ENCODE measurements at regions of chr5 and their contacts with region 1.

Region 1: GRCh38 chr5:157476702-157477408 is 16.8 kb downstream of the NIPAL4 start:
- DNase-seq: peak in 3 of 10 donors; percentile 57 to 66 (median 62)
- H3K4me3 ChIP-seq: no peak overlapping the region
- H3K27ac ChIP-seq: peak overlapping the region in 26 of 59 donors; percentile 18 to 97 (median 58)
- H3K27me3 ChIP-seq: no peaks in the 10 kb centered on the region
- CTCF ChIP-seq: peak; percentile 50 to 95 (median 80)

Region 2: DNA sequence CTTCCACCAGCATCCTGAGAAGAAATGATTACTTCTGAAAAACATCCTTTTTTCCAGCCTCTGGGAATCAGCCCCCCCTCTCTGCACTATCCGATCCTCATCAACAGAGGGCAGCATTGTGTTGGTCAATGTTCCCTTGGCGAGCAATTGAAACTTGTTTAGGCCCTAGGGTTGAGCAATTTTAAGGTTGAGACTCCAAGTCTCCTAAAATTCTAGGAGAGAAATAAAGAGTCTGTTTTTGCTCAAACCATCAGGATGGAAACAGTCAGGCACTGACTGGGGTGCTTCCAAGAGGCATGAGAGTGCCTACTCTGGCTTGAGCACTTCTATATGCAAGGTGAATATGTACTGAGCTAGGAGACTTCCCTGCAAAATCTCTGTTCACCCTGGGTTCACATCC is 223.3 kb before region 1 on chr5:
- intact Hi-C with region 1: no loop called
- DNase-seq: peak in 6 of 10 donors; percentile 39 to 69 (median 52)
- H3K4me3 ChIP-seq: peak overlapping the region in 1 of 59 donors; percentile 3
- H3K27ac ChIP-seq: peak overlapping the region in 2 of 59 donors; percentile 24 to 35
- H3K27me3 ChIP-seq: no peaks in the 10 kb centered on the region
- CTCF ChIP-seq: peak; percentile 57 to 93 (median 86)

Region 3: DNA sequence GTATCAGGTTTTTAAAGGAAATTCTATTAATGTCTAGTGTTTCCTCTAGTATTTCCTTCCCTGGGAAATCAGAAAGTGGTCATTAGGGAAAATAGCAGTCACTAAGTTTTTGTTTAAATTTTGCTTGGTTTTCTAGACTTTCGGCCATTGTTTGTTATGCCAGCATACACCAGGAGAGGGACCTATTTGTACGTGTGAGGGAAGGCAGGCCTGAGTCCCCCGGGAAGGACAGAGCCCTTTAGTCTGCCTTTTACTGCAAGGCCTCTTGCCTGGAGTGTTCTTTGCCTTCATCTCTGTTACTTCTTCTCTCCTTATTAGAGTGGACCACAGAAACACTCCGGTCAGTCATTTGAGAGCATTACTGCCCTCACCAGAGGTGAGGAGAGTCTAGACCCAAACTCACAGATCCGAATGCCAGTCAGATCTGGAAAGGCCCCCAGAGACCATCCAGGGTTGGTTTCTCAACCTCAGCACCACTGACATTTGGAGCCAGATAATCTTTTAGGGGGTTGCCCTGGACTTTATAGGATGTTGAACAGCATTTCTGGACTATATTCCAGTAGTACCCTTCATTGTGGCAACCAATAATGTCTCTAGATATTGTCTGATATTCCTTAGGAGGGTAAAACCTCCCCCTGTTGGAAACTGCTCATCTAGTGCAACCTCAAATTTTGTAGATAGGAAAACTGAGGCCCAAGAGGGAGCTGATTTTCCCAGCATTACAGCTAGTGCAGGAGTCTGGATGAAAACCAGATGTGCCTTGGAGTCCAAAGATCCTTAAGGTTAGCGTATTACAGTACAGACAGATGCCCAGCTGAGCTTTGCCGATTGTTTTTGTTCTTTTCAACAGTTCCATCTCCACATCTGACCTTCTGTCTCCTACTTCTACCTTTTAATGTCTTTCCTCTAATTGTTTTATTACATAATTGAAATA is 109.8 kb before region 1 on chr5:
- intact Hi-C with region 1: loop called (anchors 5 to 10 kb)
- DNase-seq: peak in 1 of 10 donors; percentile 39
- H3K4me3 ChIP-seq: no peak overlapping the region
- H3K27ac ChIP-seq: peak overlapping the region in 12 of 59 donors; percentile 2 to 45 (median 26)
- H3K27me3 ChIP-seq: no peaks in the 10 kb centered on the region
- CTCF ChIP-seq: peak in 54 of 56 donors; percentile 19 to 73 (median 49)

Region 4: DNA sequence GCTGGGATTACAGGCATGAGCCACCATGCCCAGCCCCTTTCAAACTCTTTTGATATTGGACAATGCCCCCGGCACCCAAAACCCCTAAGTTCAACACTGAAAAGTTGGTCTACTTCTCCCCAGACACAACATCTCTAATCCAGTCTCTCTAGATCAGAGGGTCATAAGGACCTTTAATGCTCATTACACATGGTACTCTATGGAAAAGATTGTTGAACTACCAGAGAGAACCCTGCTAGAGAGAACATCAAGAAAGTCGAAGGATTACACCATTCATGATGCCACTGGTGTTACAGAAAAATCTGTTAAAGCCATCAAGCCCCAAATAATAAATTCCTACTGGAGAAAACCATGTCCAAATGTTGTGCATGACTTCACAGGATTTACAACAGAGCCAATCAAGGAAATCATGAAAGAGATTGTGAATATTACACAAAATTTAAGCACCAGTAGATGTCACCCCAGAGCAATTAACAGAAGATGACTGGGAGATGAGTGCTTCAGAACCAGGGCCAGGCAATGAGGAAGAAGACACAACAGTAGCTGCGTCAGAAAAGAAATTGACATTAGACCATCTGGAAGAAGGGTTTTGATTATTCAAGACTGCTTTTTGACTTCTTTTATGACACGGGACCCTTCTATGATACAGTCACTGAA is 45.2 kb before region 1 on chr5:
- intact Hi-C with region 1: loop called (anchors 1 to 5 kb)
- DNase-seq: peak in 2 of 10 donors; percentile 24 to 32
- H3K4me3 ChIP-seq: peak overlapping the region in 3 of 59 donors; percentile 11 to 40 (median 23)
- H3K27ac ChIP-seq: peak overlapping the region in 29 of 59 donors; percentile 2 to 72 (median 44)
- H3K27me3 ChIP-seq: no peaks in the 10 kb centered on the region
- CTCF ChIP-seq: peak; percentile 46 to 90 (median 72)

Region 5: DNA sequence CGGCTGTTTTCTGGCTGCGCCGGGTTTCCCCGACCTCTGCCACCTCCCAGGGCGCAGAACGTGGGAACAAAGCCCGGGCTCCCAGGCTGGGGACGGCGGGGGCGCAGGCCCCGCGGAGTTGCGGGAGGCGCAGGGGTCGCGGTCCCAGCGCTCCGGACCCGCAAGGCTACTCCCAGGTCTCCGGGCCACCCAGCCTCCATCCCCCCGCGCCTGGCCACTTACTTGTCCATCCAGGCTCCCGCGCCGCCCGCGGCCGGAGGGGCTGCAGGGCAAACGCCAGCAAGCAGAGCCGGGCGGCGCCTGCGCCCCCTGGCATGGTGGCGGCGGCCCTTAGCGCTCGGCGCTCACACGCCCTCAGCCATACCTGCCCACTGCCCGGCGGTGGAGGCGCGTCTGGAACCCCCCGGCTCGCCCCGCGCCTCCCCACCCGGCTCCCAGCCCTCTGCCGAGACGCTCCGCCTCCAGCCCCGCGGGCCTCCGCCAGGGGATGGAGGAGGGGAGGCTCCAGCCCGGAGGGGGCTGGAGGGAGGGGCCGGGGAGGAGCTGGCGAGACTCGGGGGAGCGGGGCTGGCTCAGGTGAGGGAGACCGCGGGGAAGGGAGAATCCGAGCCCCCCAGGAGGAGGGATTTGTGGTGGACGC is 98.6 kb after region 1 on chr5 and contains the start of gene ADAM19:
- intact Hi-C with region 1: loop called in 1 of 2 experiments (anchors 5 kb)
- DNase-seq: peak in 4 of 10 donors; percentile 45 to 61 (median 55)
- H3K4me3 ChIP-seq: peak within 1 kb of the TSS; percentile 60 to 95 (median 80)
- H3K27ac ChIP-seq: peak within 1 kb of the TSS in 54 of 59 donors; percentile 7 to 89 (median 76)
- H3K27me3 ChIP-seq: peaks cover 0 to 7% (median 0%) of the 10 kb centered on the region in 45 donors
- CTCF ChIP-seq: peak in 14 of 56 donors; percentile 9 to 37 (median 24)
- total RNA-seq, gene ADAM19: 6.7 to 17.9 (median 11.0) TPM

Region 6: GRCh38 chr5:157900644-157901043 is 423.8 kb after region 1 on chr5:
- intact Hi-C with region 1: no loop called
- DNase-seq: no peak
- H3K4me3 ChIP-seq: no peak overlapping the region
- H3K27ac ChIP-seq: no peak overlapping the region
- H3K27me3 ChIP-seq: peaks cover 0 to 7% (median 0%) of the 10 kb centered on the region in 45 donors
- CTCF ChIP-seq: no peak